Naive thymus-derived CD4-positive, alpha-beta T cell (primary cell): ENCODE measurements at regions of chr9 and their contacts with region 1.

Region 1: DNA sequence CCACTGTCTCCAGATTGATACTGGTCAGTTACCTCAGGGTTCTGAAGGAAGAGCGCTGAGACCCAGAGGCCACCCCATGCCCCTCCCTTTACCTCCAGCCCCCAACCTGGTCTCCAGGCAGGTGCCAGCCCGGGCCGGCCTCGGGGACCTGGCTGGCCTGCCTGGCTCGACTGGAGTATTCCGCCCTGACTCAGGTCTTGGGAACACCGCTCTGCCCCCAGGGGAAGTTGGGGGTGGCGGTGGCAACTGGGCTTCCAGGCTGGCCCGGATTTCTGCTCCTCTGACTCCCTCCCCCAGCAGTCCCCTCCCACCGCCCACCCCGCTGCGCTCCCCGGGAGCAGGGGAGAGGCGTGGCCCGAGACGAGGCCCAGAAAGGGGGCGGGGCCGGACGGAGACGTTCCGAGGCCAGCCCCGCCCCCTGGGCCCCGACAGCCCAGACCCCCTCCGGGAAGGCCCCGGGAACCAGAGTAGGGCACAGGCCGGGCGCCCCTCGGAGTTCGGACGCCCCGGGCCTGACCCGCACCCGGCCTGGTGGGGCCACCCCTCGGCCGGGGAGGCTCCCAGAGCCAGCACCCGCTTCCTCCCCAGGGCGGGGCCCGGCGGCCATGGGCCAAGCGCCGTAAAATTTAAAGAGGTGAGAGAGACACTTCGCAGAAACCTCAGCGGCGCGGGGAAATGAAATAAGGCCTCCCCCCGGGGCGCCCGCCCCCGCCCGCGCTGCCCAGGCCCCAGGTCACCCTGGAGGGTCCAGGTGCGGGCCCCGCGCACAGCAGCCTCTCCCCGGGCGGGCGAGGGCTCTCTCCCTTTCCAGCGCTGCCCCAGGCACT is 82.4 kb upstream of the ZBTB43 start:
- DNase-seq: peak; percentile 75 to 93 (median 84)
- ATAC-seq: peak; percentile 82
- H3K4me3 ChIP-seq: peak overlapping the region; percentile 84
- H3K4me3 Mint-ChIP-seq: peak overlapping the region; percentile 82 to 96 (median 88)
- H3K27ac ChIP-seq: peak overlapping the region; percentile 90
- H3K27ac Mint-ChIP-seq: peak overlapping the region; percentile 92 to 99 (median 98)
- H3K4me1 ChIP-seq: peaks cover 31 to 44% of the 10 kb centered on the region in 2 donors
- H3K4me1 Mint-ChIP-seq: peaks cover 42 to 53% (median 49%) of the 10 kb centered on the region in 7 donors
- H3K27me3 ChIP-seq: no peaks in the 10 kb centered on the region
- H3K27me3 Mint-ChIP-seq: peaks cover 0 to 17% (median 0%) of the 10 kb centered on the region in 5 donors

Region 2: DNA sequence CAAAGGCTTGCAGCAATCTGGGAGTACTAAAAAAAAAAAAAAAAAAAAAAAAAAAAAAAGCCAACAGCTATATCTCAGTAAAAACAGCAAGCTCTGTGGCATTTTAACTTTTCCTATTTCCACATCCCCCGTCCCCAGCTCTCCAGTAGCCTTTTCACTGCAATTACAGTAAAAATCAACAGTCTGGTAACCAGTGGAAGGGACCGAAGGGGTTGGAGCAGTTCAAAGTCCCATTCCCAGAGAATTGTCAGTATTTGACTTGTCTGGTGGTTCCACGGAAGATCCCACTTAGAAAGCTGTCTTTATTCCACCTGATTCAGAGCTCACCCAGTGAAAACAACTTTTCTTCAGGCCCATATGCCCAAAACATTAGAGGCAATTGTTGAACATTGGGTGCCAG is 10.5 kb after region 1 on chr9:
- CTCF ChIA-PET with region 1: no interaction called
- POLR2A ChIA-PET with region 1: interaction called, 12 read pairs
- intact Hi-C with region 1: no loop called
- DNase-seq: no peak
- ATAC-seq: no peak
- H3K4me3 ChIP-seq: no peak overlapping the region
- H3K4me3 Mint-ChIP-seq: peak overlapping the region in 1 of 10 donors; percentile 29
- H3K27ac ChIP-seq: no peak overlapping the region
- H3K27ac Mint-ChIP-seq: no peak overlapping the region
- H3K4me1 ChIP-seq: no peaks in the 10 kb centered on the region
- H3K4me1 Mint-ChIP-seq: peaks cover 0 to 4% (median 0%) of the 10 kb centered on the region in 7 donors
- H3K27me3 ChIP-seq: no peaks in the 10 kb centered on the region
- H3K27me3 Mint-ChIP-seq: peaks cover 0 to 33% (median 0%) of the 10 kb centered on the region in 5 donors

Region 3: GRCh38 chr9:126781186-126782052 is 59.0 kb after region 1 on chr9:
- CTCF ChIA-PET with region 1: interaction called, 5 read pairs
- POLR2A ChIA-PET with region 1: interaction called, 4 read pairs
- intact Hi-C with region 1: loop called in 1 of 2 experiments (anchors 1 kb)
- DNase-seq: peak; percentile 55 to 87 (median 74)
- ATAC-seq: peak; percentile 95
- H3K4me3 ChIP-seq: no peak overlapping the region
- H3K4me3 Mint-ChIP-seq: no peak overlapping the region
- H3K27ac ChIP-seq: no peak overlapping the region
- H3K27ac Mint-ChIP-seq: peak overlapping the region in 1 of 9 donors; percentile 55
- H3K4me1 ChIP-seq: no peaks in the 10 kb centered on the region
- H3K4me1 Mint-ChIP-seq: peaks cover 0 to 4% (median 0%) of the 10 kb centered on the region in 7 donors
- H3K27me3 ChIP-seq: no peaks in the 10 kb centered on the region
- H3K27me3 Mint-ChIP-seq: peaks cover 2 to 27% (median 12%) of the 10 kb centered on the region in 5 donors

Region 4: DNA sequence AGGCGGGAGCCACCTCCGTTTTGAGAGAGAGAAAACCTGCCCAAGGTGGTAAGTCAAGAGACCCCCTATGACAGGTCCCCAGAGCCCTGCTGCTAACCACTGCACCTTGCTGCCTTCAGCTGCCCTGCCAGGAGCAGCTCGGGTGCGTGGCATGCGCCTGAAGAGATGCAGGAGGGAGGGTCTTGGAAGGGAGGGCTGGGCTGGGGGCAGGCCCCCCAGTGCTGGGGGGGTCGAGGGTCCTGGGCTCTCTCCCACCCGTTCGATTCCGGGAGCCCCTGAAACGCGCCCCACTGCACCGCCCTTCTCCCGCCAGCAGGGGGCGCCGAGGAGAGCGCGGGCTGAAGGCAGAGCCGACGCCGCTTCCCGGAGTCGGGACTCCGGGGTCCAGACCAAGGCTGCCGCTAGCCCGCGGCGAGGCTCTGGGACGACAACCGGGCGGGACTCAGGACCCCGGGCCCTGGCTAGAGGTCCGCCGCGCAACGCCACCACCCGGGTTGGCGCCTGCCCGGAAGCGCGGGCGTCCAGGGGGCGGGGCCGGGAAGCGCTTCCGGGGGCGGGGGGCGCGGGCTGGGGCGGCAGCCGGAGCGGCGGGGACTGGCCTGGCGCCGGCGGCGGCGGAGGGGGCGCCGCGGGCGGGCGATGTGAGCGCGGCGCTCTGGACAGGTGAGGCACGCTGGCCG is 137.8 kb after region 1 on chr9 and contains the start of gene ZBTB34:
- CTCF ChIA-PET with region 1: no interaction called
- POLR2A ChIA-PET with region 1: interaction called, 4 read pairs
- intact Hi-C with region 1: loop called in 1 of 2 experiments (anchors 2 kb)
- DNase-seq: peak; percentile 67 to 92 (median 82)
- ATAC-seq: peak; percentile 91
- H3K4me3 ChIP-seq: peak within 1 kb of the TSS; percentile 65
- H3K4me3 Mint-ChIP-seq: peak within 1 kb of the TSS; percentile 84 to 94 (median 90)
- H3K27ac ChIP-seq: peak within 1 kb of the TSS; percentile 84
- H3K27ac Mint-ChIP-seq: peak within 1 kb of the TSS; percentile 68 to 92 (median 85)
- H3K4me1 ChIP-seq: peaks cover 10 to 25% of the 10 kb centered on the region in 2 donors
- H3K4me1 Mint-ChIP-seq: peaks cover 18 to 40% (median 30%) of the 10 kb centered on the region in 7 donors
- H3K27me3 ChIP-seq: no peaks in the 10 kb centered on the region
- H3K27me3 Mint-ChIP-seq: peaks cover 0 to 38% (median 6%) of the 10 kb centered on the region in 5 donors
- total RNA-seq, gene ZBTB34: 5.2 to 9.4 (median 8.8) TPM

Region 5: DNA sequence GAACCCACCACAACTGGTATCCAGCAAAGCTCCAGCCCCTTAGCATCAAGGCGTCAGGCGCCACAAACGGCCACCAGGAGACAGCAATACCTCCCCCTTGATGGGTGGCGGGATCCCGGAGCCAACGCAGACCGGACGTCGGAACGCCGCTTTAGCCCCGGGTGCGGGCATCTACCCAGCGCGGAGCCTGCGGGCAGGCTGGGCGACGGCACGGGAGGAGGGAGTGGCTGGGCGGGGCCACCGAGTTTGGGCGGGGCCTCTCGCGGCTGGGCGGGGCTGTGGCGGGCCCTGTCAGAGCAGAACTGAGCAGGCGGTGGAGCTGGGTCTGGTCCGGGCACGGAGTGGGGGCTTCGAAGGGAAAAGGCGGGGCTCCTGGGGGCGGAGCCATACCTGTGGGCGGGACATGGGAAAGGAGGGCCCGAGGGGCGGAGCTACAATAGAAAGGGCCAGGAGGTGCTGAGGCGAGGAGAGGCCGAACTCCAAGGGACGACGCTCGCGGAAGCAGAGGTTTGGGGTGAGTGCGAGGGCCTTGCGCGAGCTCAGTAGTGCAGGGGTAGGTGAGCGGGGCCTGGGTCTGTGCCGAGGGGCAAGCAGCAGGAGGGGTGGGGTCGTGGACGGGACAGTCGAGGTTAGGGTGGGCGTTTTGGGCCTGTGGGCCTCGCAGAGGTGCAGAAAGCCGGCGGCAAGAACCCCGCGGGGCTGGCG is 501.9 kb after region 1 on chr9:
- CTCF ChIA-PET with region 1: no interaction called
- POLR2A ChIA-PET with region 1: no interaction called
- intact Hi-C with region 1: loop called in 1 of 2 experiments (anchors 10 kb)
- DNase-seq: peak; percentile 81 to 90 (median 85)
- ATAC-seq: peak; percentile 82
- H3K4me3 ChIP-seq: peak overlapping the region; percentile 51
- H3K4me3 Mint-ChIP-seq: peak overlapping the region; percentile 74 to 93 (median 85)
- H3K27ac ChIP-seq: no peak overlapping the region
- H3K27ac Mint-ChIP-seq: peak overlapping the region; percentile 8 to 94 (median 82)
- H3K4me1 ChIP-seq: peaks cover 10 to 31% of the 10 kb centered on the region in 2 donors
- H3K4me1 Mint-ChIP-seq: peaks cover 24 to 49% (median 41%) of the 10 kb centered on the region in 7 donors
- H3K27me3 ChIP-seq: no peaks in the 10 kb centered on the region
- H3K27me3 Mint-ChIP-seq: peaks cover 0 to 58% (median 12%) of the 10 kb centered on the region in 5 donors